Adrenal gland (tissue), 19 donors: ENCODE measurements at regions of chr4 and their contacts with region 1.

Region 1: DNA sequence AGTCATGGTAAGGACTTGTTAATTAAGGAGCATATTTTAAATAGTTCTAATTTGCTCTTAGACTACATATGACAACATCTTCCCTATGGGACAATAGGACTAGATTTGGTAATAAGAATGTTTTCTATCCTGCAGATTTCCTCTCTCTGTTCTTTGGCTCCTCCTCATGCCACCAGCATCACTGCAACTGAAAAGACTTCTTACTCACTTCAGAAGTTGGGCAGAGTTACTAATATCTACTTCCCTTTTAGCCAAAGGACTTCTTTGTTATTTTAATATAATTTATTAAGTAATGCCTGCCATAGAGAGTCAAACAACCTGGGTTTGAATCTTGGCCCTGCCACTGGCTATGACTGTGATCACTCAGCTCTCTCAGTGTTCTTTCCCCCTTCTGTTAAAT is 16.4 kb downstream of the MMAA start:
- DNase-seq: no peak
- H3K4me3 ChIP-seq: no peak overlapping the region
- H3K27ac ChIP-seq: no peak overlapping the region
- H3K4me1 ChIP-seq: peaks cover 7 to 19% of the 10 kb centered on the region in 2 donors
- H3K27me3 ChIP-seq: no peaks in the 10 kb centered on the region
- CTCF ChIP-seq: no peak
- POLR2A ChIP-seq: no peak

Region 2: DNA sequence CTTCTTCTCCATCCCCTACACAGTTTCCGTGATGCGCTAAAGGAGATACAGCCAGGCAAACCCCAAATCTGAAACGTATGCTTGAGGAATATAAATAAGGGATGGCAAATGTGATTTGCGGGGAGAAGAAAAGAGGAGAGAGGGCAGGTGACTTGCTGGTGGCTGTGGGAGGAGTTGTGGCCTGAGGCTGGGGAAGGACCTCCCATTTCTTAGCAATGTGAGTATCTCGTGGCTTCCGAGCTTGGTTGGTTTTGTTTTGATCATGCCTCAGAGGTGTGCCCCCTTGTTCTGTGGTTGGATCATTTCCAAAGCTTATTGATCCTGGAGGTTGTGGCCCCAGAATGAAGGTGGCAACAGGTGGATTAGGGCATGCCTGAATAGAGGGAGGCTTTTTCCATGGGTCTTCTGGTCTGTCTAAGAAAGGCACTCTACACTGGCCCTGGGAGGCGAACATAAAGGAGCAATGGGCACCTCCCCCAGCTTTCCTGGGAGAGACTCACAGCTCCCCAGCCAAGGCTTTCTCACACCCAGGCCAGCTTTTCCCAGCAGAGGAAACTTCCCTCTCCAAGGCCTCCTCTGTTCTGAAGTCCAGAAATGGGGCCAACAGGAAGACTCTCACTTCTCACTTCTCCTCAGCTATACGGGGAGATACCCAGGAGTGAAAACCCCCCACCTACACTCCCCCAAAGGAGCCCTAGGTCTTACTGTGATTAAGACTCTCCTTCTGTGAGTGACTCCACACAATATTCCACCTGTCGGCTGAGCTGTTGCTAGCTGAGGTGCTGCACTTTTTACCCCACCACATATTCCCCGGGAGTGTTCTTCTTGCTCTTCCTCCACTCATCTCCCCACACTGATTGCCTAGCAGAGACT is 84.4 kb after region 1 on chr4:
- intact Hi-C with region 1: loop called in 1 of 2 experiments (anchors 10 kb)
- DNase-seq: no peak
- H3K4me3 ChIP-seq: no peak overlapping the region
- H3K27ac ChIP-seq: no peak overlapping the region
- H3K4me1 ChIP-seq: no peaks in the 10 kb centered on the region
- H3K27me3 ChIP-seq: no peaks in the 10 kb centered on the region
- CTCF ChIP-seq: no peak
- POLR2A ChIP-seq: no peak